Activated CD8-positive, alpha-beta memory T cell treated with anti-CD3 and anti-CD28 coated beads, Interleukin-2, amount 10 ng/mL, durations not matched to agents 7 days and 5 days (primary cell): ENCODE measurements at regions of chr12 and their contacts with region 1.

Region 1: GRCh38 chr12:121773011-121773777 is 20.3 kb downstream of the RHOF start:
- DNase-seq: peak; percentile 90
- ATAC-seq: peak; percentile 87
- H3K4me3 Mint-ChIP-seq: no peak overlapping the region
- H3K27ac Mint-ChIP-seq: peak overlapping the region; percentile 70
- H3K4me1 Mint-ChIP-seq: peaks cover 10% of the 10 kb centered on the region
- H3K27me3 Mint-ChIP-seq: no peaks in the 10 kb centered on the region

Region 2: DNA sequence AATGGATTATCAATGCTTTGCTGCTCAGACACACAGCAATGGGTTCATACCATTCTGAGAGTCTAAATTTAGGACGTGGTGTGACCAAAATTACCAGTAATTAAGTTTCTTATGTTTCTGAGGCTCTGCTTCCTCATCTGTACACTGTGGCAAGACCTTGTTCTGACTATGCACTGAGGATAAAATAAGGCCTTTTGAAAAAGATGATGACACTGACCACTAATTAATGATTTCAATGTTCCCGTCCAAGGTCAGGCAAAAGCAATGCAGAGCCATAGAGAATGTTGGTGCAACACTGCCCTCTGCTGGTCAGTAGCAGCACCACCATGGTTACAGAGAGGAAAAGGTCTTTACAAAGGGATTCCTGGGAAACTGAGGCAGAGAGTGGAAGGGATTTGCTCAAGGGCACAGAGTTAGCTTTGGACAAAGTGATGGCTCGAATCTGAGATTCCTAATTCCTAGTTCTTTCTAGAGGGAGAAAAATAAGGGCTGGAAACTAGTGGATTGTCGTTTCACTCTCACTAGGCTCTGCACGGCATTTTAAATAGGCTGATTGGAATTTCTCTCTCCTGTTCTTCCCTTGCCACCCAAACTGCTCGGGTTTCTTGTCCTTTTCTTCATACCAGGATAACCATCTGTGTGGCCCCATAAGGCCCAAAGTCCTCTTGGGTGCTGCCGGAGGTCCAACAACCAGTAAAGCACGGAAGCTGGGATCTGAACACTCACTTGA is 662.8 kb before region 1 on chr12:
- CTCF ChIA-PET with region 1: no interaction called
- DNase-seq: peak; percentile 79
- ATAC-seq: peak; percentile 87
- H3K4me3 Mint-ChIP-seq: no peak overlapping the region
- H3K27ac Mint-ChIP-seq: peak overlapping the region; percentile 5
- H3K4me1 Mint-ChIP-seq: peaks cover 13% of the 10 kb centered on the region
- H3K27me3 Mint-ChIP-seq: no peaks in the 10 kb centered on the region

Region 3: DNA sequence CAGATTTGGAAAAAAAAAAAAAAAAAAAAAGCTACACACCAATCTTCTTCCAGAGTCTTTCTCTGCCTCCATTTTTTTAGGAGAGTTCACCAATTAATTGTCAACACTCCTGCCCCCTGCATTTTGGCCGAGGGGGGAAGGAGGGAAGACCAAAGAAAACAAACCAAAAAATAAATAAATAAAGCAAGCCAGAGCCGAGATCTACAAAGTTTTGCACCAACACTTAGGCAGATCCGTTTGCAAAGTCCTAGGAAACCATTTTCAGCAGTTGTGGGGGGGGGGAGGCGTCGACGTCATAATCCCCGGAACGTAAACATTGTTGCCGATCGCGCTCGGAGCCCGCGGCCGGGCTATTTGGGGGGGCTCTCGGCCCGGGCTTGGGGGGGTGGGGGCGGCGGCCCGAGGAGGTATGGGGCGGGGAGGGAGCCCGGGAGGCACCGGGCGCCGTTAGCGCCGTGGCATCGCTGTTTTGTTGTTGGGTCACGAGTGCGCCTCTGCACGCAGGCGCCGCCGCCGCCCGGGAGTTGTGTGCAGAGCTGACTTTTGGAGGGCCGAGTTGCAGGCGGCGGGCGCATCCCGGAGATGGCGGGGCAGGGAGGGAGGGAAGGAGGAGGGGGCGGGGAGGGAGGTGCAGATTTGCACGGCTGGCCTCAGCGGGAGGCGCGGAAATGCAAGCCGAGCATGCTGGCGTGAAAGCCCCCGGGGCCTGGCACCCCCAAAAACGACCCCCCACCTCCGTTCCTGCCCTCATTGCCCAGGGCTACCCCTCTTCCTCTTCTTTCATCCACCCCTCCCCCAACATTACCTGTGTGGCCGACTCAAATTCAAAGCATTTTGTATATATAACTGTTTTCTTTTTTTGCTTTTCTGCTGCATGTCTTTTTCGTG is 193.0 kb before region 1 on chr12:
- CTCF ChIA-PET with region 1: no interaction called
- DNase-seq: peak; percentile 85
- ATAC-seq: peak; percentile 78
- H3K4me3 Mint-ChIP-seq: peak overlapping the region; percentile 85
- H3K27ac Mint-ChIP-seq: peak overlapping the region; percentile 96
- H3K4me1 Mint-ChIP-seq: peaks cover 26% of the 10 kb centered on the region
- H3K27me3 Mint-ChIP-seq: no peaks in the 10 kb centered on the region

Region 4: GRCh38 chr12:121697098-121697698 is 76.0 kb before region 1 on chr12:
- CTCF ChIA-PET with region 1: interaction called, 79 read pairs
- DNase-seq: no peak
- ATAC-seq: no peak
- H3K4me3 Mint-ChIP-seq: no peak overlapping the region
- H3K27ac Mint-ChIP-seq: no peak overlapping the region
- H3K4me1 Mint-ChIP-seq: peaks cover 4% of the 10 kb centered on the region
- H3K27me3 Mint-ChIP-seq: peaks cover 2% of the 10 kb centered on the region

Region 5: DNA sequence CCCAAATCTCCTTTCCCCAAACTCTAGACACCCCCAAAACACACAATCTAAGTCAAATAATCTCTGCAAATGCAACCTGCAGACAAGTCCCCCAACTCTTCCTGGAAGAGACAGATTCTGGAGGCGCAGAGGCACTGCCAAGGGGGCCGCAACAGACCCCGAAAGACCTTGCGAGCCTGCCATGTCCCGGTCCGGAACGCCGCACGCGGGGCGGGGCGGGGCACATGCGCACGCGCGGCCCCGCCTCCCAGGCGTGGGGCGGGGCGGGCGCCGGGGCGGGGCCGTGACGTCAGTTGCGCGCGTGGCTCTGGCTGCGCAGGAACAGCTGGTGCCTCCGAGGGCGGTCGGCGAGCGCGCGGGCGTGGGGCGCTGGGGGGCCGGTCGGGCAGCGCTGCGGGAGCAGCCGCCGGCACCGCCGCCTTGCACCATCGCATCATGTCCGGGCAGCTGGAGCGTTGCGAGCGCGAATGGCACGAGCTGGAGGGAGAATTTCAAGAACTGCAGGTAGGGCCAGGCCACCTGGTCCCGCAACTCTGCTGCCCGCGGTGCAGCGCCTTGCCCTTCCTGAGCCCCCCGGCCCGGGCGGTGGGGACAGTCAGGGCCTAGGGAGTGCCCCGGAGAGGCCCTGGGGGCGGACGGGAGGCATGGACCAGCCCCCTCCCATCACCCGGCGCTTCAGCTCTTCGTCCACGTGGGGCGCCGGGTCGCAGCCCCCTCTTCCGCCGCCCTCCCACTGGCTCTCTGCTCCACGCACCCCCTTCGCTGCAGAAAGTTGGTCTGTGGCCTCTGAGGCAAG is 60.5 kb before region 1 on chr12 and contains the start of gene TMEM120B:
- CTCF ChIA-PET with region 1: interaction called, 27 read pairs
- DNase-seq: peak; percentile 85
- ATAC-seq: peak; percentile 89
- H3K4me3 Mint-ChIP-seq: peak within 1 kb of the TSS; percentile 99
- H3K27ac Mint-ChIP-seq: peak within 1 kb of the TSS; percentile 96
- H3K4me1 Mint-ChIP-seq: peaks cover 26% of the 10 kb centered on the region
- H3K27me3 Mint-ChIP-seq: no peaks in the 10 kb centered on the region
- total RNA-seq, gene TMEM120B: 8.8 to 11.0 TPM

Region 6: GRCh38 chr12:121719926-121720414 is 53.2 kb before region 1 on chr12:
- CTCF ChIA-PET with region 1: interaction called, 12 read pairs
- DNase-seq: no peak
- ATAC-seq: no peak
- H3K4me3 Mint-ChIP-seq: no peak overlapping the region
- H3K27ac Mint-ChIP-seq: no peak overlapping the region
- H3K4me1 Mint-ChIP-seq: peaks cover 10% of the 10 kb centered on the region
- H3K27me3 Mint-ChIP-seq: no peaks in the 10 kb centered on the region

Region 7: GRCh38 chr12:121754849-121755248 is 18.3 kb before region 1 on chr12:
- CTCF ChIA-PET with region 1: interaction called, 13 read pairs
- DNase-seq: no peak
- ATAC-seq: no peak
- H3K4me3 Mint-ChIP-seq: no peak overlapping the region
- H3K27ac Mint-ChIP-seq: no peak overlapping the region
- H3K4me1 Mint-ChIP-seq: peaks cover 17% of the 10 kb centered on the region
- H3K27me3 Mint-ChIP-seq: no peaks in the 10 kb centered on the region